GM10248 (cell line): ENCODE measurements at regions of chr22 and their contacts with region 1.

Region 1: DNA sequence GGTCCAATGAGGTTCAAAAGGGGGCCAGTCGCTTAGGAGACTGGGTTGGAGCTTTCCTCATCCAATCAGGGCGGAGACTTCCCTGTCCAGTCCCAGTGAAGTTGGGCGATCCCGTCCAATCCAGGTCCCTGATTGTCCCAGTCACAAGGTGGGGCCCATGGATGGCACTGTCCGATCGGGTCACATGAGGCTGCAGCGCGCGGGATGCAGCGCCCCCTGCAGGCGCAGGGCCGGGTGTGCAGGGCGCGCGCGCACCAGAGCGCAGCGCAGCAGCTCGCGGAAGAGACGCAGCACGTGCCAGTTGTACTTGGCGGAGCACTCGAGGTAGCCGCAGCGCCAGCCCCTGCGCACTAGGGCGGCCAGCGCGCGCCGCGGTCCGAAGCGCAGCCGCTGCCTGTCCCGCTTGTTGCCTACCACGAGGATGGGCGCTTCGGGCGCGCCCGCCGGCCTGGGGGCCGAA is 2.3 kb downstream of the RASL10A start:
- DNase-seq: no peak
- CTCF ChIP-seq: peak; percentile 53

Region 2: GRCh38 chr22:29302681-29303465 is 10.3 kb before region 1 on chr22:
- CTCF ChIA-PET with region 1: interaction called, 10 read pairs
- POLR2A ChIA-PET with region 1: no interaction called
- DNase-seq: no peak
- CTCF ChIP-seq: no peak